Activated CD4-positive, alpha-beta memory T cell treated with anti-CD3 and anti-CD28 coated beads, Interleukin-2, amount 10 ng/mL, durations not matched to agents 7 days and 5 days (primary cell): ENCODE measurements at regions of chr5 and their contacts with region 1.

Region 1: GRCh38 chr5:73215891-73216610 is 43.1 kb downstream of the TMEM174 start:
- DNase-seq: peak; percentile 62
- H3K4me3 Mint-ChIP-seq: no peak overlapping the region
- H3K27ac Mint-ChIP-seq: no peak overlapping the region
- H3K4me1 Mint-ChIP-seq: peaks cover 18% of the 10 kb centered on the region
- H3K27me3 Mint-ChIP-seq: peaks cover 79% of the 10 kb centered on the region

Region 2: DNA sequence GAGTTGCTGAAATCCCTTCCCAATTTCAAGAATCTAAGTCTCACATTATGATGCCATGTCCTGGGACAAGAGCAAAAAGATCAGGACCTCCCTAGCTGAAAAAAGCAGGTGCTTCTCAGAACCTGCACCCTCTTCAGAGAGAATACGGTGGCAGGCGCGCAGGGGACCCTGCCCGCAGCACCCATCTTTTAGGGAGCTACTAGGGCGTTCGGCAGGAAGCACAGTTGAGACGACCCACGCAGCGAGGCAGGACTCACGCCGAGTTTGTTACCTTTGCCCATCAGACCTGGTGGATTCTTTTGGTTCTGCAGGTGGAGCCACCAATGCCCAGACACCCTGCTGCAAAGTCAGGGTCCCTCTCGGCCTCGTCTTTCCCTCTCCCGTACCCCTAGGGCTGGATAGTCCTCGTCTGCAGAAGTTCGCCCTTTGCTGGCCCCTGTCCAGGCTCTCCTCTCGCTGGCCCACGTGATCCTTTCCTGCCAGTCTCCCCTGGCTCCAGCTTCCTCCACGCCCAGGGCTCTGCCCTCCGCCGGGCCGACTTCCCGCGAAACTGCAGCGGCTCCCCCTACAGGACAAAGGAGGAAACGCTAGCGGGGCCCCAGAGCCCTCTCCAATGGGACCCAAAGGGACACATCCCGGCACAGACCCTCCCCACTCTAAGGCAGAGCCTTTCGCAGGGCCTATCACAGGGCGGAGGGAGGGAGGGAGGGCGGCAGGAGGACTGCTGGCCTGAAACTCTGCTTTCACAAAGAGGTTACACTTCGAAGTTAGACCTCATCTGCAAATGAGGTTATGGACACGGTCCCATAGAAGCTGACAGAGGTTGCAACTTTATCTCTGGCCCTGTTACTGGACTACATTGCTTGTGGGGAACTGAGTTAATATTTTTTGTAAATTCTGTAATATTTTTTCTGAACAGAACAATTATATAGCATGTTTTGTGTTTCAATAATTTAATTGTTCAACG is 14.2 kb before region 1 on chr5:
- CTCF ChIA-PET with region 1: interaction called, 13 read pairs
- POLR2A ChIA-PET with region 1: no interaction called
- DNase-seq: peak; percentile 68
- H3K4me3 Mint-ChIP-seq: no peak overlapping the region
- H3K27ac Mint-ChIP-seq: no peak overlapping the region
- H3K4me1 Mint-ChIP-seq: no peaks in the 10 kb centered on the region
- H3K27me3 Mint-ChIP-seq: peaks cover 45% of the 10 kb centered on the region

Region 3: DNA sequence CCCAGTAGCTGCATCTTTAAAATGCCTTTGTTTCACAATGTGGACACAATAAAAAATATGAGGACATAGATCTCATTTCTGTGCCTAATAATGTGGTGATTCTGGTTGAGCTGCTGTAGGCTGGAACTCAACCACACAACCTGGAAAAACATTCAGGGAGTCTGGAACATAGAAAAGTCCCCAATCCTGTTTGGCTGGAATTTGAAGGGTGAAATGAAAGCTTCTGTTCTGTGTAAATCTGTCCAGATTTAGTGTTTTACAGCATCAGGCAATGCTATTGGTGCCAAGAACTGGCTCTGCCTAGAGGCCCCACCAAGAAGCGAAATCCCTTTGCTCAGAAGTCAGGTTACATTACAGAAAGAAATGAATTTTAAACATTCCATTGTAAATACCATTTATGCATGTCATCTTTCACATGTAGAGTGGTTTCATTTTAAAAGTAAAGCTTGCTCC is 13.2 kb after region 1 on chr5:
- CTCF ChIA-PET with region 1: interaction called, 25 read pairs
- POLR2A ChIA-PET with region 1: no interaction called
- DNase-seq: no peak
- H3K4me3 Mint-ChIP-seq: no peak overlapping the region
- H3K27ac Mint-ChIP-seq: no peak overlapping the region
- H3K4me1 Mint-ChIP-seq: peaks cover 17% of the 10 kb centered on the region
- H3K27me3 Mint-ChIP-seq: peaks cover 78% of the 10 kb centered on the region

Region 4: GRCh38 chr5:73443829-73444498 is 227.9 kb after region 1 on chr5:
- CTCF ChIA-PET with region 1: interaction called, 11 read pairs
- POLR2A ChIA-PET with region 1: no interaction called
- DNase-seq: no peak
- H3K4me3 Mint-ChIP-seq: no peak overlapping the region
- H3K27ac Mint-ChIP-seq: no peak overlapping the region
- H3K4me1 Mint-ChIP-seq: peaks cover 16% of the 10 kb centered on the region
- H3K27me3 Mint-ChIP-seq: peaks cover 79% of the 10 kb centered on the region

Region 5: GRCh38 chr5:73451224-73452130 is 235.4 kb after region 1 on chr5:
- CTCF ChIA-PET with region 1: interaction called, 22 read pairs
- POLR2A ChIA-PET with region 1: no interaction called
- DNase-seq: peak; percentile 66
- H3K4me3 Mint-ChIP-seq: no peak overlapping the region
- H3K27ac Mint-ChIP-seq: no peak overlapping the region
- H3K4me1 Mint-ChIP-seq: peaks cover 23% of the 10 kb centered on the region
- H3K27me3 Mint-ChIP-seq: peaks cover 74% of the 10 kb centered on the region